ENCODE measurements at regions of chr16 and their contacts with region 1.

Region 1: DNA sequence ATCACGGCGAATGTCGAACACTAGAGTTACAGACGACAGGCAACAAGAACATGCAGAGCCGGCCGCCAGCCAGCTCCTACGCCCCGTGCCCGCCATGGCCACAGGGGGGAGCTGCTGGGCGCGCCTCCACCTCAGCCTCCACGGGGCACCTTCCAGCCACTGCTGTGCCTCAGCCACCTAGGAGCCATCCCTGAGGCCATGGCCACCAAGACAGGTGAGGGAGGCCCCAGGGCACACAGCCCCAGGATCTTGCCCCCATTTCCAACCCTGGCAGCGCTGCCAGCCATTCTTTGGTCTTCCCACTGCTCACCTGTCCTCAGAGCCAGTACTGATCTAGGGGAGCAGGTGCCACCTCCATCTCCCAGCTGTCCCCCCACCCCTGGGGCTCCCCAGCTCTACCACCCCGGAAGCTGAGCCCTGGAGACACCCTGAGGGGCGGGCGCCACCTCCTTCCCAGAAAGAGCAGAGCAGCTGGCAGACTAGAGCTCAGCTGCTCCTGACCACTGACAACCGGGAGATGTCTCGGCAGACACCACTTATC is 11.8 kb downstream of the GNPTG start:
- DNase-seq: no peak
- H3K4me3 ChIP-seq: no peak overlapping the region
- CTCF ChIP-seq: peak; percentile 94

Region 2: GRCh38 chr16:1221628-1222552 is 141.7 kb before region 1 on chr16:
- CTCF ChIA-PET with region 1: no interaction called
- POLR2A ChIA-PET with region 1: no interaction called
- DNase-seq: no peak
- H3K4me3 ChIP-seq: no peak overlapping the region
- CTCF ChIP-seq: no peak

Region 3: DNA sequence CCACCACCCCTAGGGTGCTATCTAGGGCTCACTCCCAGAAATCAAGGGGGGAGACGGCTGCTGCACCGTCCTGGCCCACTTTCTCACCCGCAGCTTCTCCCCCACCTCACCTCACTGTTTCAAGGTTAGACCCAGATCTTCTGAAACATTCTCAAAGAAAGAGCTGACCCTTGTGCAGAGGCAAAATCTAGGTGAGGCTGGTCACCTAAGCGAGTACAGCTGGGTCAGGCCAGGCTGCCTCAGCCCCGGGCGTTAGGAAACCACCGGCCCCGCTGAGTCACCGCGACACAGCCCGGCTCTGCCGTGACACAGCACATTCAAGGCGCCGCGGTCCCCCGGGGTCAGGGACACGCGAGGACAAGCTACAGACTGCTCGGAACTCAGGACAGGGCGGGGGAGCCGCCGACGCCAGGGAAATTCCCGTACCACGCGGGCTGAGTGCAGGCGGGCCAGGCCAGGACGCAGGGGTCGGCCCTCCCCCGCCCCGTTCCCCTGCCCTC is 15.3 kb after region 1 on chr16:
- CTCF ChIA-PET with region 1: interaction called, 37 read pairs
- POLR2A ChIA-PET with region 1: interaction called, 3 read pairs
- DNase-seq: peak; percentile 7
- H3K4me3 ChIP-seq: peak overlapping the region; percentile 59
- CTCF ChIP-seq: no peak

Region 4: DNA sequence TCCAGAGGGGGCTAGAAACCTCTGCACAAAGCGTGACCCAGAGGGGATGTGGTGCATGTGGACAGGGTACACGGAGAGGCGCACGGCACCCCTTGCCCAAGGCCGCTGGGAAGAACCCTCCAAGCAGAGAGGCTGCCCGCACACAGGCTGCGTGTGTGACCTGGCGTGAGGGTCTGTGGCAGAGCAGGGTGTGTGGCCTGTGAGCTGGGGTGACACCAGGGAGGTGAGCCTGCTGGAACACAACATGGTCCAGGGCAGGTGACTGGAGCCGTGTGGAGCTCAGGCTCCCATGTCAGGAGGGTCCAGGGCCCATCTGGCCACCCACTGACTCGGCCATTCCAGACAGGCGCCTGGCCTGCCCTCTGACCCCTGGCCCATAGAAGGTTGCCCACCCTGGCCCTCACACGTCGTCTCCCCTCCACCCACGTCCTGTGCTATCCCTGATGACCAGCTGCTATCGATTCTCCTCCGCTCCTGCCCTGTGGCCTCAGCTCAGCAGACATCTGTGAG is 155.1 kb after region 1 on chr16:
- CTCF ChIA-PET with region 1: no interaction called
- POLR2A ChIA-PET with region 1: no interaction called
- DNase-seq: no peak
- H3K4me3 ChIP-seq: no peak overlapping the region
- CTCF ChIP-seq: no peak